Endothelial cell of umbilical vein (primary cell): ENCODE measurements at regions of chr4 and their contacts with region 1.

Region 1: GRCh38 chr4:80221161-80221560 is 23.9 kb downstream of the PRDM8 start:
- DNase-seq: no peak
- H3K4me3 ChIP-seq: no peak overlapping the region
- H3K27ac ChIP-seq: no peak overlapping the region
- H3K4me1 ChIP-seq: no peaks in the 10 kb centered on the region
- H3K27me3 ChIP-seq: peaks cover 23 to 52% of the 10 kb centered on the region in 2 experiments
- CTCF ChIP-seq: peak in 1 of 2 donors; percentile 27
- POLR2A ChIP-seq: no peak

Region 2: DNA sequence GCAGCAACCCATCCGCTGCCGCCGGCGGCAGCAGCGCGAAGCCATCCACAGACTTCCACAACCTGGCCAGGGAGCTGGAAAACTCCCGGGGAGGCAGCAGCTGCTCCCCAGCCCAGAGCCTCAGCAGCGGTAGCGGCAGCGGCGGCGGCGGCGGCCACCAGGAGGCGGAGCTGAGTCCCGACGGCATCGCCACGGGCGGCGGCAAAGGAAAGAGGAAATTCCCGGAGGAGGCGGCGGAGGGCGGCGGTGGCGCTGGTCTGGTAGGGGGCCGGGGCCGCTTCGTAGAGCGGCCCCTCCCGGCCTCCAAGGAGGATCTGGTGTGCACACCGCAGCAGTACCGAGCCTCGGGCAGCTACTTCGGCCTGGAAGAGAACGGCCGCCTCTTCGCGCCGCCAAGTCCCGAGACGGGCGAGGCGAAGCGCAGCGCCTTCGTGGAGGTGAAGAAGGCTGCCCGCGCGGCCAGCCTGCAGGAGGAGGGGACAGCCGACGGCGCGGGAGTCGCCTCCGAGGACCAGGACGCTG is 18.9 kb before region 1 on chr4:
- CTCF ChIA-PET with region 1: interaction called, 29 read pairs
- POLR2A ChIA-PET with region 1: no interaction called
- dilution Hi-C with region 1: no loop called
- intact Hi-C with region 1: no loop called
- DNase-seq: peak; percentile 77
- H3K4me3 ChIP-seq: peak overlapping the region; percentile 43 to 48 (median 47)
- H3K27ac ChIP-seq: no peak overlapping the region
- H3K4me1 ChIP-seq: peaks cover 18% of the 10 kb centered on the region
- H3K27me3 ChIP-seq: peaks cover 36 to 45% of the 10 kb centered on the region in 2 experiments
- CTCF ChIP-seq: peak; percentile 76 to 84
- POLR2A ChIP-seq: no peak

Region 3: DNA sequence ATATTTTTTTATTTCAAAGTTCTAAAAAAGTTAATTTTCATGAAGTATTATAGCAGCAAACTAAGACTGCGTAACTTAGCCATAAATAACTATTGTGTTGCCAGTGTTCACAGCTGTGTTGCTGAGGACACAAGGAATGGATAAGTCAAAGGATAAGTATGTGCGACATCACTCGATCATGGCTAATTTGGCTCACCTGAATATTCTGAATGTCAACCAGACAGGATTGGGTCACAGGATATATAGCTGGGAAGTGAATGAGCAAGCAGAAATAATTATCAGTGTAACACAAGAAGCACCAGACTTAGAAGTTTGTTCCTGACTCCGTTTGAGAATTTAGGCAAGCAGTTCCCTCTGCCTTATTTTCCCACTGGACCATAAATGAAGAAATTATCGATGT is 10.0 kb after region 1 on chr4:
- CTCF ChIA-PET with region 1: interaction called, 25 read pairs
- POLR2A ChIA-PET with region 1: no interaction called
- dilution Hi-C with region 1: no loop called
- intact Hi-C with region 1: no loop called
- DNase-seq: no peak
- H3K4me3 ChIP-seq: no peak overlapping the region
- H3K27ac ChIP-seq: no peak overlapping the region
- H3K4me1 ChIP-seq: peaks cover 19% of the 10 kb centered on the region
- H3K27me3 ChIP-seq: peaks cover 3 to 5% of the 10 kb centered on the region in 2 experiments
- CTCF ChIP-seq: no peak
- POLR2A ChIP-seq: no peak

Region 4: DNA sequence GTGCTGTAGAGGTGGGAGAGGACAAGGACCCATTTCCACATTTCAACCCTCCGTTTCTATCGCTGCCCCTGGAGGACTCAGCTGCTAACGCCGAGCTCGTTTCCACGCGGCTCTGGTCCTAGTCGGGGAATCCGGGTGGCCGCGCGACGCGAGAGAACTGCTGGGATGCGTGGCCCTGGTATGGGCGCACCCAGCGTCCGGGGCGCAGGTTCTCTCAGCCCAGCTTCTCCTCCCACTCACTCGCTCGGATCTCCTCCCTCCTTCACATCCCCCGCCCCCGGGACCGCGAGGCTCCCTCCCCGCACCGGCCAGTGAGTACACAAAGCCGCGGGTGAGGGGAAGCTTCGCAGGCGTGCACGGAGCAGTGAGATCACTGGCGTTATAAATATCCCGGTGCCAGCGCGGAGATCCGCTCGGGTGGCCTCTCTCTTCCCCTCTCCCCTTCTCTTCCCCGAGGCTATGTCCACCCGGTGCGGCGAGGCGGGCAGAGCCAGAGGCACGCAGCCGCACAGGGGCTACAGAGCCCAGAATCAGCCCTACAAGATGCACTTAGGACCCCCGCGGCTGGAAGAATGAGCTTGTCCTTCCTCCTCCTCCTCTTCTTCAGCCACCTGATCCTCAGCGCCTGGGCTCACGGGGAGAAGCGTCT is 45.2 kb after region 1 on chr4 and contains the start of gene FGF5:
- CTCF ChIA-PET with region 1: interaction called, 36 read pairs
- POLR2A ChIA-PET with region 1: no interaction called
- dilution Hi-C with region 1: no loop called
- intact Hi-C with region 1: loop called (anchors 5 kb)
- DNase-seq: peak; percentile 38
- H3K4me3 ChIP-seq: peak within 1 kb of the TSS; percentile 30 to 76 (median 64)
- H3K27ac ChIP-seq: peak within 1 kb of the TSS; percentile 49
- H3K4me1 ChIP-seq: peaks cover 12% of the 10 kb centered on the region
- H3K27me3 ChIP-seq: peaks cover 77 to 91% of the 10 kb centered on the region in 2 experiments
- CTCF ChIP-seq: no peak
- POLR2A ChIP-seq: no peak
- total RNA-seq, gene FGF5: 0.13 and 1.7 TPM in 2 replicates

Region 5: GRCh38 chr4:80279751-80280150 is 58.6 kb after region 1 on chr4:
- CTCF ChIA-PET with region 1: interaction called, 13 read pairs
- POLR2A ChIA-PET with region 1: no interaction called
- dilution Hi-C with region 1: no loop called
- intact Hi-C with region 1: no loop called
- DNase-seq: no peak
- H3K4me3 ChIP-seq: no peak overlapping the region
- H3K27ac ChIP-seq: no peak overlapping the region
- H3K4me1 ChIP-seq: no peaks in the 10 kb centered on the region
- H3K27me3 ChIP-seq: peaks cover 5 to 29% of the 10 kb centered on the region in 2 experiments
- CTCF ChIP-seq: no peak
- POLR2A ChIP-seq: no peak

Region 6: DNA sequence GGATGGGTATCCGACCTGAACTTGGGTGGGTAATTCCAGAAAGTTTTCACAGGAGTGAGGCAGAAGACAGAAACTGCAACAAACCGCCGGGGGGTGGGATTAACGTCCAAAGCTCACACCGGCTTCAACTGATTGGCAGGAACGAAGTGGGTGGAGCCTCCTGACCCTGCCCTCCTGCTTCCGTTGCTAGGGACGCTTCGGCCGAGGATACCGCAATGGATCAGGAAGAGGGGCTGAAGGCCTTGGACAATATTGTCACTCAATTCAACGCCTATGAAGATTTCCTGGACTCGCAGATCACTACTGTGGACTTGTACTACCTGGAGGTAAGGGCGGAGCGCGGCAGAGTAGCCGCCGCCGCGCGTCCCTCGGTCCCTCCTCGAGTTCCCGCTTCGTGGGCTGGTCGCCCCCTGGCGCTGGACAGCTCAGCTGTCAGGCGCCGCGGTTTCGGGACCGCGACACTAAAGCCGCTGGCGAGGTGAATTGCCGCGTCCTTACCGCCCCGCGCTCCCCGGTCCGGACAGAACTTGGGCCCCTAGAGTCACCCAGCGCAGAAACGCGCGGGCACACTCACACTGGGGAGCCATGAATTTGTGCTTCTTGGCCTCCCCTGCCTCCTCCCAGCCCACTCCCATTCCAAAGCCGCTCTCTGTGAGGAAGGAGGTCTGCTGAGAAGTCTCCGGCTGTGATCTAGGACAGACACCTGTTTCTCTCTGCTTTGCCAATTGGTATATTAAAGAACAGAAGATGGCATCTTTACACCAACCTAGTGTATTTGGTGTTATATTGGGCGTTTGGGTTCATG is 114.6 kb after region 1 on chr4 and contains the start of gene CFAP299:
- CTCF ChIA-PET with region 1: interaction called, 99 read pairs
- POLR2A ChIA-PET with region 1: no interaction called
- dilution Hi-C with region 1: no loop called
- intact Hi-C with region 1: loop called (anchors 1 kb)
- DNase-seq: peak; percentile 68
- H3K4me3 ChIP-seq: peak within 1 kb of the TSS; percentile 37 to 67 (median 46)
- H3K27ac ChIP-seq: no peak within 1 kb of the TSS
- H3K4me1 ChIP-seq: peaks cover 6% of the 10 kb centered on the region
- H3K27me3 ChIP-seq: peaks cover 18 to 63% of the 10 kb centered on the region in 2 experiments
- CTCF ChIP-seq: peak; percentile 54 to 67
- POLR2A ChIP-seq: no peak
- total RNA-seq, gene CFAP299: not detected in 2 replicates